ENCODE measurements at regions of chr10 and their contacts with region 1.

Region 1: GRCh38 chr10:71696628-71697326 is 22.8 kb downstream of the C10orf105 start:
- DNase-seq: no peak
- H3K4me3 ChIP-seq: no peak overlapping the region
- CTCF ChIP-seq: peak; percentile 81

Region 2: GRCh38 chr10:71319042-71319799 is 377.6 kb before region 1 on chr10 and contains the start of gene SLC29A3:
- CTCF ChIA-PET with region 1: interaction called, 105 read pairs
- POLR2A ChIA-PET with region 1: no interaction called
- DNase-seq: no peak
- H3K4me3 ChIP-seq: peak within 1 kb of the TSS; percentile 72
- CTCF ChIP-seq: peak; percentile 88

Region 3: GRCh38 chr10:71679425-71679824 is 17.4 kb before region 1 on chr10:
- CTCF ChIA-PET with region 1: interaction called, 38 read pairs
- POLR2A ChIA-PET with region 1: no interaction called
- DNase-seq: no peak
- H3K4me3 ChIP-seq: no peak overlapping the region
- CTCF ChIP-seq: no peak

Region 4: DNA sequence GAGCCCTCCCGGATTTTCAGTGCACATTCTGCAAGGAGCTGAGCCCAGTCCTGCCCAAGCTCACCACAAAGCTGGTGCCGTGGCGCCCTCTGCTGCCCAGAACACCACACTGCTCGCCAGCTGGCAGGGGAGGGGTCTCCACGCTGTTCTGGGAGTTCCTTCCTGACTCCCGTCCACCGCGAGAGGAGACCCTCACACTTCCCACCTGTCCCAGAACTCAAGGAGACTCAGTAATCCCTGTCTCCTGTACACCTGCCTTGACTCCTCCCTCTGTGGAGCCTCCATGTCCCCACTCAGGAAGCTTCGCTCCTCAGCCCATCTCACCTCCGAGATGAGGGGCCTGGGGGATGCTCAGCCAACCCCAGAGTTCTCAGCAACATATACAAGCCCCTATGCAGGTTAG is 11.5 kb after region 1 on chr10:
- CTCF ChIA-PET with region 1: interaction called, 73 read pairs
- POLR2A ChIA-PET with region 1: no interaction called
- DNase-seq: no peak
- H3K4me3 ChIP-seq: no peak overlapping the region
- CTCF ChIP-seq: peak; percentile 77

Region 5: GRCh38 chr10:71771821-71772617 is 75.2 kb after region 1 on chr10:
- CTCF ChIA-PET with region 1: interaction called, 26 read pairs
- POLR2A ChIA-PET with region 1: no interaction called
- DNase-seq: no peak
- H3K4me3 ChIP-seq: peak overlapping the region; percentile 70
- CTCF ChIP-seq: no peak

Region 6: GRCh38 chr10:71795248-71795647 is 98.5 kb after region 1 on chr10:
- CTCF ChIA-PET with region 1: no interaction called
- POLR2A ChIA-PET with region 1: no interaction called
- DNase-seq: no peak
- H3K4me3 ChIP-seq: no peak overlapping the region
- CTCF ChIP-seq: no peak

Measured in AG04449 (cell line).